ENCODE measurements at regions of chr1 and their contacts with region 1.

Region 1: DNA sequence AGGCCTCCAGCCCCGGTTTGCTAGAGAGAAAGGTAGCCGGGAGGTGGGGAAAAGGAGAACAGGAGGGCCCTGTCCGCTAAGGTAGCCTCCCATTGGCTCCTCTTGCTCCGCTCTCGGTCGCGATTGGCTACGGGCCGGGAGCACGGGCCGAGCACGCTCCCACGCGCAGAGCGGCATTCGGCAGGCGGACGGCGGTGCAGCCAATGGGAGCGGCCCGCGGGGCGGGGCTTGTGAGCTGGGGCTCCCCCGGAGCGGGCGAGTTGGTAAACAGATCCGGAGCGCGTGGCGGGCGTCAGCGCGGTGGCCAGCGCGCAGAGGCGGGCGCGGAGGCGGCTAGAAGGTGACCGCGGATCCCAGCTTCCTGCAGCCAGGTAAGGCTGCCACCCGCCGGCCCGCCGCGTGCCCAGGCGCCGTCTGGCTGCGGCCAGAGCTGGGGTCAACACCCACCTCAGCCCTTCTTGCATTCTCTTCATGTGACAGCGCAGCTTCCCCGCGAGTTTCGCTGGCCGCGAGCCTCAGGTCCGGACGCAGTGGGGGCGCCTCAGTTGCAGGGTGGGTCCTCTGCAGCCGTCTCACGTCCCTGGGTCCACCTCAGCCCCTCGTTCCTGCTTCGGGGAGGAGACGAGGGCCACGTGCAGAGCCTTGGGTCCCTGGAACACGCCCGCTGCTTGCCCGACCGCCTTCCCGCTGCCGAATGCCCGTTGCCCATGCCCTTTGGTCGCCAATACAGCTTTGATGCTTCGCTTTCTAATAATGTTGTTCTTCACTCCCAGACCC is at the start of gene COQ8A:
- DNase-seq: peak; percentile 99 to 100 (median 100)
- ATAC-seq: peak; percentile 96 to 98 (median 98)
- H3K4me3 ChIP-seq: peak within 1 kb of the TSS; percentile 73 to 98 (median 86)
- H3K27ac ChIP-seq: peak within 1 kb of the TSS; percentile 92 to 99 (median 98)
- H3K4me1 ChIP-seq: peaks cover 3 to 62% (median 47%) of the 10 kb centered on the region in 12 donors
- H3K27me3 ChIP-seq: no peaks in the 10 kb centered on the region
- CTCF ChIP-seq: no peak
- POLR2A ChIP-seq: peak; percentile 6 to 87
- total RNA-seq, gene COQ8A: 141 to 915 (median 310) TPM

Region 2: DNA sequence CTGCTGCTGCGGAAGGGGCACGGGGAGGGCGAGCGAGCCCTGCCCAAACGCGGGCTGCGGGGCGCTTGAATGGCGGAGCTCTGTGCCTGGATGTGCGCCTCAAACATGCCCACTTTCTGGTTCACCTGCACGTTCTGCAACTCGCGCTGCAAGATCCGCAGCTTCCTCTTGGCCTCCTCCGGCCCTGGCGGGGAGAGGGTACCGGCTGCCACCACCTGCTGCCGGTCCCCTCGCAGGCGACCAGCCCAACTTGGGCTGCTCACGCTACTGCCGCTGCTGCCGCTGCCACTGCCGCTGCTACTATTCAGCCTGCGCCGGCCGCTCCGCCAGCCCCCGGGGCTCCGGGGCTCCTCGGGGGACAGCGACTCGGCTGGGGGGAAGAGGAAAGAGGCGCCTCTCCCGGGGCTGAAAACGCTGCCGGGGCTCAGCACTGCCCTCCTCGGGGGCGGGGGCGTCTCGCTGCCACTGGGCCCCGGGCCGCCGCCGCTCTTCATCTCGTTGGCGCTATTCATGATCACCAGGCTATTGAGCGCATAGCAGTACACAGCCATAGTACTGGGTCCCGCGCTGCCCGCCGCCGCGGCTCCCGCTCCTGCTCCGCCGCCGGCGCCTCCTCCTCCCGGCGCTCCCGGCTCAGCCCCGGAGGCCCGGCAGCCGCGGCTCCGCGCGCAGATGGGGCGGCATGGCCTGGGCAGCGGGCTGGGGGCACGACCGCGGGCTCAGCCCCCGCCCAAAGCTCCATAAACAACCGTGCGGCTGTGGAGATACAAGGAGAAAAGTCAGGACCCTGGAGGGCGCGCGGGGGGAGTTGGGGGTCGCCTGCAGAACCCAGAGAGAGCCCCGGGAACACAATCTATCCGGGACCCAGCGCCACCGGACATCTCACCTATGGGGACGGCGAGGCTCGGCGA is 203.1 kb before region 1 on chr1:
- intact Hi-C with region 1: no loop called
- DNase-seq: peak; percentile 40 to 77 (median 51)
- ATAC-seq: peak in 3 of 4 donors; percentile 17 to 68 (median 56)
- H3K4me3 ChIP-seq: peak overlapping the region; percentile 54 to 98 (median 88)
- H3K27ac ChIP-seq: peak overlapping the region; percentile 84 to 96 (median 92)
- H3K4me1 ChIP-seq: peaks cover 0 to 62% (median 34%) of the 10 kb centered on the region in 12 donors
- H3K27me3 ChIP-seq: no peaks in the 10 kb centered on the region
- CTCF ChIP-seq: peak in 2 of 12 donors; percentile 21 to 29
- POLR2A ChIP-seq: no peak

Region 3: DNA sequence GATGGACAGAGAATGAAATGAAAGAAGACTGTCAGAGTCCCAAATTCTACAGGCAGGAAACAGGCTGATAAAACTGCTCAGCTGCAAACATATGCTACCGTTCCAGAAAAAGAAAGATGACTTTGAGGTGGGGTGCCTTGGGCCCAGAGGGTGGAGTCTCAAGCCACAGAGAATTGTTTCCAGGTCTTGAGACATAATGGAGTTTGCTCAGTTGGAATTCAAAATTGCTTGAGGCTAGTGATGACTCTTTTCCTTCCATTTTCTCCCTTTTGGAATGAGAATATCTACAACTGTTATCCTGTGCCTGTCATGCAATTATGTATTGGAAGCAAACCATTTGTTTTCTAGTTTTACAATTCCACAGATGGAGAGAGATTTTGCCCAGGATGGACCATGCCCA is 93.4 kb before region 1 on chr1:
- intact Hi-C with region 1: no loop called
- DNase-seq: no peak
- ATAC-seq: no peak
- H3K4me3 ChIP-seq: no peak overlapping the region
- H3K27ac ChIP-seq: no peak overlapping the region
- H3K4me1 ChIP-seq: no peaks in the 10 kb centered on the region
- H3K27me3 ChIP-seq: no peaks in the 10 kb centered on the region
- CTCF ChIP-seq: no peak
- POLR2A ChIP-seq: no peak

Region 4: GRCh38 chr1:226870401-226871279 is 69.6 kb before region 1 on chr1 and contains the start of gene PSEN2:
- intact Hi-C with region 1: loop called in 1 of 10 experiments (anchors 1 kb)
- DNase-seq: peak; percentile 71 to 89 (median 80)
- ATAC-seq: peak; percentile 59 to 91 (median 88)
- H3K4me3 ChIP-seq: peak within 1 kb of the TSS; percentile 68 to 98 (median 80)
- H3K27ac ChIP-seq: peak within 1 kb of the TSS in 11 of 12 donors; percentile 52 to 89 (median 81)
- H3K4me1 ChIP-seq: peaks cover 5 to 41% (median 21%) of the 10 kb centered on the region in 12 donors
- H3K27me3 ChIP-seq: no peaks in the 10 kb centered on the region
- CTCF ChIP-seq: peak in 9 of 12 donors; percentile 13 to 46 (median 22)
- POLR2A ChIP-seq: peak in 1 of 2 donors; percentile 67
- total RNA-seq, gene PSEN2: 17.2 to 30.9 (median 21.7) TPM

Region 5: GRCh38 chr1:226973898-226974543 is 33.8 kb after region 1 on chr1:
- intact Hi-C with region 1: loop called in 1 of 10 experiments (anchors 2 kb)
- DNase-seq: peak in 2 of 5 donors; percentile 67 to 75
- ATAC-seq: peak; percentile 11 to 72 (median 64)
- H3K4me3 ChIP-seq: no peak overlapping the region
- H3K27ac ChIP-seq: peak overlapping the region; percentile 80 to 97 (median 94)
- H3K4me1 ChIP-seq: peaks cover 0 to 53% (median 36%) of the 10 kb centered on the region in 12 donors
- H3K27me3 ChIP-seq: no peaks in the 10 kb centered on the region
- CTCF ChIP-seq: peak in 2 of 12 donors; percentile 9 to 16
- POLR2A ChIP-seq: no peak

Region 6: DNA sequence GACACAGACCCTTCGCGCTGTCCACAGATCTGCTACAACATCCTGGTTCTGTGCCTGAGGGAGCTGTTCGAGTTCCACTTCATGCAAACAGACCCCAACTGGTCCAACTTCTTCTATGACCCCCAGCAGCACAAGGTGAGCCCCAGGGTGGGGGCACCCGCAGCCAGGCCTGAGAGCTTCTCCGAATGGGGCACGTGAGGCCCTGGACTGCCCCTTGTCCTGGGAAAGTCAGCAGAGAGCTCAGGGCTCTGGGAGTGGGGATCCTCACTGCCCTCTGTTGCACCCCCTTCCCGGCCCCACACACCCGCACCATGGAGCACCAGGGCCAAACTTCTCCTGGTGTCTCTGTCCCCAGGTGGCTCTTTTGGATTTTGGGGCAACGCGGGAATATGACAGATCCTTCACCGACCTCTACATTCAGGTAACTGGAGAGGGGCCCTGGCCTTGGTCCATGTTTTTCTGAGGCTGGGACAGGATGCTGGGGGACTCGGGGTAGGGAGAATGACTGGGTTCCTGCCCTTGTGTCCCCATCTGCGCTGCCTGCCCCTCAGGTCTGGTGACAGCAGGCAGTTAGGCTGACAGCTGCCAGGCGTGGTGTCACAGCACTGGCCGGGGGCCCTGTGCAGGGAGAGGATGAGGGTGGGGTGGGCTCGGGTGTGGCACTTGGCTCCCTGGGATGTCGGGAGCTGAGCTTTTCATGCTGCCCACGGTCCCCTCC is 44.5 kb after region 1 on chr1:
- intact Hi-C with region 1: loop called in 4 of 10 experiments (anchors 5 kb)
- DNase-seq: peak; percentile 67 to 79 (median 74)
- ATAC-seq: peak; percentile 24 to 67 (median 36)
- H3K4me3 ChIP-seq: no peak overlapping the region
- H3K27ac ChIP-seq: peak overlapping the region in 11 of 12 donors; percentile 60 to 96 (median 79)
- H3K4me1 ChIP-seq: peaks cover 0 to 100% (median 50%) of the 10 kb centered on the region in 12 donors
- H3K27me3 ChIP-seq: no peaks in the 10 kb centered on the region
- CTCF ChIP-seq: no peak
- POLR2A ChIP-seq: no peak

Region 7: DNA sequence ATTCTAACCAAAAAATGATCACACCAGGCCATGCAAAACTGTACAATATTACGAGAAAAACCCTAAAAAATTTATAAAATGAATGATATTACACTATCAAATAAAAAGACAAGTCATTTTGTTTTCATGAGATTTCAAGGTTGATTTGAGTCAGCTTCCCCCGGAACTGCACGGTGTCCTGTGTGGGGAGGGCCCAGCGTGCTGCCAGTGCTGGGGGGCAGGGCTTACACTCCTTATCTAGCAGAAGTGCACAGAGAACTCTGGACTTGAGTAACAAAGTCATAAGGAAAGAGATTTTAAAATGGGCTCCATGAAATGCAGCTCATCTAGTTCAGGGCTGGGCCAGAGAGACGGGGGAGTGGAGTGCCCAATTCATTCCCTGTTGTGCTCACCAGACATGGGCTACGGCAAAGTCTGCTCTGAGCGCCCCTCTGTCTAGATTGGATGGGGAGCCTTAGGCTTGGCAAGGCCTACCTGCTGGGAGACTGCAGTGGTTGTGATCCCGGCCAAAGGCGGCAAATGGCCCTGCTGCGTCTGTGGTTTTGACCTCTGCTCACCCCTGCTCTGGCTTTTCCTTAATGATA is 50.0 kb after region 1 on chr1:
- intact Hi-C with region 1: loop called in 1 of 10 experiments (anchors 5 kb)
- DNase-seq: peak in 2 of 5 donors; percentile 18 to 38
- ATAC-seq: peak in 3 of 4 donors; percentile 19 to 37 (median 26)
- H3K4me3 ChIP-seq: no peak overlapping the region
- H3K27ac ChIP-seq: peak overlapping the region in 10 of 12 donors; percentile 9 to 94 (median 56)
- H3K4me1 ChIP-seq: peaks cover 0 to 75% (median 43%) of the 10 kb centered on the region in 12 donors
- H3K27me3 ChIP-seq: no peaks in the 10 kb centered on the region
- CTCF ChIP-seq: no peak
- POLR2A ChIP-seq: no peak

Measured in heart left ventricle (tissue), 16 donors.